ENCODE measurements at regions of chr4 and their contacts with region 1.

Region 1: DNA sequence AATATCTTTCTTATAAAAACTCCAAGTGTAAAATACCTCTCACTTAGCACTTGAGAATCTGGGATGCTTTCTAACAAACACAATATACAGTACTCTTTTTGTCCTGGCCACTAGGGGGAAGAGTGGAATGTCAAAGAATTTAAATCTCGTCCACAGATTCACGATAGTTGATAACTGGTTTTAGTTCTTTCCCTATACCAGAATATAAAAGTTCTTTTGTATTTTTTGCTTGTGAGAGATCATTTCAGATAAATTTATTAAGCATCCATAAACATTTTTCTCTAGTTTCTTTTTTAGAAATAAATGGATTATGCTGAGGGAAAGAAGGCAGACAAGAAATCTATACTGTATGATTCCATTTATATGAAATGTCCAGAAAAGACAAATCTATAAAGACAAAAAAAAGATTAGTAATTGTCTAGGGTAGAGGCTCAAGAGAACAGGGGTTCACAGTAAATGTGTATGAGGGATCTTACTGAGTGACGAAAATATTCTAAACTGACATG is 50.4 kb downstream of the MGARP start:
- DNase-seq: no peak
- H3K4me3 ChIP-seq: no peak overlapping the region
- H3K27ac ChIP-seq: no peak overlapping the region
- H3K27me3 ChIP-seq: no peaks in the 10 kb centered on the region
- CTCF ChIP-seq: peak; percentile 73

Region 2: GRCh38 chr4:139144161-139144859 is 85.3 kb before region 1 on chr4:
- CTCF ChIA-PET with region 1: no interaction called
- POLR2A ChIA-PET with region 1: no interaction called
- DNase-seq: peak; percentile 26
- H3K4me3 ChIP-seq: no peak overlapping the region
- H3K27ac ChIP-seq: peak overlapping the region; percentile 1
- H3K27me3 ChIP-seq: no peaks in the 10 kb centered on the region
- CTCF ChIP-seq: no peak

Region 3: GRCh38 chr4:139243448-139244365 is 14.1 kb after region 1 on chr4:
- CTCF ChIA-PET with region 1: interaction called, 13 read pairs
- POLR2A ChIA-PET with region 1: interaction called, 4 read pairs
- DNase-seq: peak; percentile 95
- H3K4me3 ChIP-seq: no peak overlapping the region
- H3K27ac ChIP-seq: peak overlapping the region; percentile 78
- H3K27me3 ChIP-seq: no peaks in the 10 kb centered on the region
- CTCF ChIP-seq: no peak

Region 4: DNA sequence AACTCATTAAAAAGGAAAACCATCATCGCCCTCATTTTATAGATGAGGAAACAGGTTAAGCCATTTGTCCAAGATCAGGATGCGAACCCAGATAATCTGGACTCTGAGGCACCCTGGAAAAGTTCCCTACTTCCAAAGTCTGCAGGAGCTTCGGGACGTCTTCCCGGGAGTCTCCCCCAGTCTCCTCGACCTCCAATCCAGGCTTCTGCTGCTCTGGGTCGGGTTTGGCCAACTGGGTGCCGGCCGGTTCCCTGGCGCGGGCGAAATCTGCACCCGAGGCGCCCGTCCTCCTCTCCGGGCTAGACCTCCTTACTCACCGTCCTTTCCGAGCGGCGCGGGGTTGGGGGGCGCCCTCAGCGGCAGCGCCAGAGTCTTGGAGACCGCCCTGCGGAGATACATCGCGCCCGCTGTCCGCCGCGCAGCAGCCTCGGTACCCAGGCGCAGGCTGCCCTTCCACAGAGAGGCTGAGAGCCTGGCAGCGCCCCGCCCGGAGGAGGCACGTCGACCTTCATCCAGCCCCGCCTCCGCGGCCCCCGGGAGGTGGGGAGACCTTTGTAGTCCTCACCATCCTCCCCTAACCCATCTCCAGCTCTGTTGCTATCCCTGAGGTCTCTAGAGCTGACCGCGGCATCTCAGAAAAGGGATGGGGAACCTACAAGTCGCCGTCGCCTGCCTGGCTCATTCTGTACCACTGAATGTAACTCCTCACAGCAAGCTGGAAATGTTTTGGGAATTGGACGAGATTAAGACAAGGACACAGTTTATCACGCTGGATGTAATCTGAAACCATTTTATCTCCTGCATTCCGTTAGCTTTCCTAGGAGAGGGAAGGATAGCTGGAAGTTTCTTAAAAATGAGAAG is 50.4 kb after region 1 on chr4 and contains the start of gene MGARP:
- CTCF ChIA-PET with region 1: interaction called, 12 read pairs
- POLR2A ChIA-PET with region 1: interaction called, 4 read pairs
- DNase-seq: no peak
- H3K4me3 ChIP-seq: peak within 1 kb of the TSS; percentile 69
- H3K27ac ChIP-seq: peak within 1 kb of the TSS; percentile 59
- H3K27me3 ChIP-seq: no peaks in the 10 kb centered on the region
- CTCF ChIP-seq: no peak
- polyA plus RNA-seq, gene MGARP: 42.6 and 57.7 TPM in 2 replicates